ENCODE measurements at regions of chr6 and their contacts with region 1.

Region 1: DNA sequence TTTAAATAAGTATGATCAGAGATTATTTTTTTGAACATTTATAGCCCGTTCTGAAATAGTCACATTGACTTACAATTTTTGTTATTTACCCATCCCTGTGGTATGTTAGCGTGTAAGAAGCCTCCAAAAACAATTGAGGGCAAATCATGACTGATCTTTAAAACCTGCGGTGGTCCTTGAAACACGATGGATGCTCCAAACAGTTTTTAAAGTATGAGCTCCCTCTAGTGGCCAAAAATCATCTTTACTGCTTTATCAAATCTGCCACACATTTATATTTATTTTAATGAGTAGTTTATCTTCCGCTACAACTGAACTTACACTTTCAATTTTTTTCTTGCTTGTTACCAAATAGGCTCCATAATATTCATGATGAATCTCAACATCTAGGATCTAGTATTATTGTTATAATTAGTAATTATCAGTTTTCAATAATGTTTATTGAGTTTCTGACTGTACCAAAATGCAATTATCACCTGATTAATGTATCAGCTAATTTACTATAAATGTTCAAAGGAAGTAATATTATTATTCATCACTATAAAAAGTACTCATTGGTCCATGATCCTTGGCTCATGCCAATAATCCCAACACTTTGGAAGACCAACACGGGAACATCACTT is 52.2 kb downstream of the MARCKS start:
- DNase-seq: peak in 1 of 2 experiments; percentile 7
- H3K4me3 ChIP-seq: no peak overlapping the region
- H3K27ac ChIP-seq: no peak overlapping the region
- H3K4me1 ChIP-seq: no peaks in the 10 kb centered on the region
- H3K27me3 ChIP-seq: no peaks in the 10 kb centered on the region
- CTCF ChIP-seq: peak in 2 of 3 experiments; percentile 50 to 56; a peak in 2 of 4 replicates
- EP300 ChIP-seq: no peak
- POLR2A ChIP-seq: no peak
- RAD21 ChIP-seq: peak; percentile 85 to 87

Region 2: GRCh38 chr6:113713665-113714064 is 195.7 kb before region 1 on chr6:
- CTCF ChIA-PET with region 1: no interaction called
- POLR2A ChIA-PET with region 1: no interaction called
- DNase-seq: no peak
- H3K4me3 ChIP-seq: no peak overlapping the region
- H3K27ac ChIP-seq: no peak overlapping the region
- H3K4me1 ChIP-seq: no peaks in the 10 kb centered on the region
- H3K27me3 ChIP-seq: no peaks in the 10 kb centered on the region
- CTCF ChIP-seq: no peak
- EP300 ChIP-seq: no peak
- POLR2A ChIP-seq: no peak
- RAD21 ChIP-seq: no peak

Region 3: GRCh38 chr6:113879186-113880096 is 29.9 kb before region 1 on chr6:
- CTCF ChIA-PET with region 1: interaction called, 17 read pairs
- POLR2A ChIA-PET with region 1: no interaction called
- DNase-seq: no peak
- H3K4me3 ChIP-seq: no peak overlapping the region
- H3K27ac ChIP-seq: no peak overlapping the region
- H3K4me1 ChIP-seq: no peaks in the 10 kb centered on the region
- H3K27me3 ChIP-seq: no peaks in the 10 kb centered on the region
- CTCF ChIP-seq: peak; percentile 17 to 81 (median 74)
- EP300 ChIP-seq: no peak
- POLR2A ChIP-seq: no peak
- RAD21 ChIP-seq: peak; percentile 96 to 97

Region 4: DNA sequence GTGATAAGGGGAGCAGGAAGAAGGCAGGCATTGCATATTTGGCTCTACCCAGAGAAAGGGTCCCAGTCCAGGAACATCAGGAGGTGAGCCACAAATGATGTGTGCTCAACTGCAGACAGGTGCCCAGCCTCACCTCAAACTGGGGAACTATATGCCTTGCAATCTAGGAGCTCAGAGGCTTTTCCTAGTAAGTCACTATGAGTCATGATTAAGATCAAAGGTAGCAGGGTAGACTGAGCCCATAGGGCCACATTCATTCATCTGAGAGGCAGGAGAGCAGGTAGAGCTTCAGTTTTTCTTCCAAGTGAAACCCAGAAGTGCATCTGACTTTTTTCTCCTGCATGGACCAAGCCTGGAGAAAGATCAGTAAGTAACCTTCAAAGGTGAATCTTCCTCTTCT is 20.9 kb before region 1 on chr6:
- CTCF ChIA-PET with region 1: interaction called, 15 read pairs
- POLR2A ChIA-PET with region 1: no interaction called
- DNase-seq: no peak
- H3K4me3 ChIP-seq: no peak overlapping the region
- H3K27ac ChIP-seq: no peak overlapping the region
- H3K4me1 ChIP-seq: no peaks in the 10 kb centered on the region
- H3K27me3 ChIP-seq: no peaks in the 10 kb centered on the region
- CTCF ChIP-seq: no peak
- EP300 ChIP-seq: no peak
- POLR2A ChIP-seq: no peak
- RAD21 ChIP-seq: no peak

Region 5: GRCh38 chr6:113920663-113921267 is 11.4 kb after region 1 on chr6:
- CTCF ChIA-PET with region 1: interaction called, 11 read pairs
- POLR2A ChIA-PET with region 1: no interaction called
- DNase-seq: no peak
- H3K4me3 ChIP-seq: no peak overlapping the region
- H3K27ac ChIP-seq: no peak overlapping the region
- H3K4me1 ChIP-seq: no peaks in the 10 kb centered on the region
- H3K27me3 ChIP-seq: peaks cover 0 to 1% (median 0%) of the 10 kb centered on the region in 4 experiments; a peak in 1 of 7 replicates
- CTCF ChIP-seq: no peak
- EP300 ChIP-seq: no peak
- POLR2A ChIP-seq: no peak
- RAD21 ChIP-seq: no peak

Region 6: DNA sequence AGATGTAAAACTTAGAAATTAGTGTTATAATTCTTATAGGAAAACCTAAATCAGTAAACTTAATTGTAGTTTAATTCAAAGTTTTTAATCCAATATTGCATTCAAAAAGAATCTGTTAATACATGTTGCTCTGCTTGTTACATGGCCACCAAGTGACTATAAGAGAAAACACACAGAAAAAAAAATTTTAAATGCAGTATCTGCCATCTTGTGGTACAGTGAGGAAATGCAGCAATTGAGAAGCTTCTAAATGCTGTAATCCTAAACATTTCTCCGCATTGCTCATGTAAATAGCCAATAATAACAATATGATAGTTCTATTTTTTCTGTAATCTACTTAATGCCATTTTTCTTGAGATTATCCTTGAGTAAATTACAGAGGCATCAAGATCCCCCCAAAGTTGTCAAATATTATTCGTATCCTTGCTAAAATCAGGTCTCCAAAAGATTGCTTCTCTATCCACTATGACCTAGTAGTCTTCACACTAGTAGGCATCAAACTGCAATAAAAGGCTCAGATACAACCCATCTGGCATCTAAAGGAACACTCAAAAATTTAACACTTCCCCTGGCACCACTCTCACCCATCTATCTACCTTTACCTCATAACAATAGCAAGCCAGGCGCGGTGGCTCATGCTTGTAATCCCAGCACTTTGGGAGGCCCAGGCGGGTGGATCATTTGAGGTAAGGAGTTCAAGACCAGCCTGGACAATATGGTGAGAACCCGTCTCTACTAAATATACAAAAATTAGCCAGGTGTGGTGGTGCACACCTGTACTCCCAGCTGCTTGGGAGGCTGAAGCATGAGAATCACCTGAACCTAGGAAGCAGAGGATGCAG is 27.0 kb after region 1 on chr6:
- CTCF ChIA-PET with region 1: interaction called, 12 read pairs
- POLR2A ChIA-PET with region 1: no interaction called
- DNase-seq: no peak
- H3K4me3 ChIP-seq: no peak overlapping the region
- H3K27ac ChIP-seq: no peak overlapping the region
- H3K4me1 ChIP-seq: no peaks in the 10 kb centered on the region
- H3K27me3 ChIP-seq: no peaks in the 10 kb centered on the region
- CTCF ChIP-seq: peak in 2 of 3 experiments; percentile 63 to 66; a peak in 2 of 4 replicates
- EP300 ChIP-seq: no peak
- POLR2A ChIP-seq: no peak
- RAD21 ChIP-seq: peak; percentile 51 to 55